Naive thymus-derived CD4-positive, alpha-beta T cell (primary cell): ENCODE measurements at regions of chr16 and their contacts with region 1.

Region 1: DNA sequence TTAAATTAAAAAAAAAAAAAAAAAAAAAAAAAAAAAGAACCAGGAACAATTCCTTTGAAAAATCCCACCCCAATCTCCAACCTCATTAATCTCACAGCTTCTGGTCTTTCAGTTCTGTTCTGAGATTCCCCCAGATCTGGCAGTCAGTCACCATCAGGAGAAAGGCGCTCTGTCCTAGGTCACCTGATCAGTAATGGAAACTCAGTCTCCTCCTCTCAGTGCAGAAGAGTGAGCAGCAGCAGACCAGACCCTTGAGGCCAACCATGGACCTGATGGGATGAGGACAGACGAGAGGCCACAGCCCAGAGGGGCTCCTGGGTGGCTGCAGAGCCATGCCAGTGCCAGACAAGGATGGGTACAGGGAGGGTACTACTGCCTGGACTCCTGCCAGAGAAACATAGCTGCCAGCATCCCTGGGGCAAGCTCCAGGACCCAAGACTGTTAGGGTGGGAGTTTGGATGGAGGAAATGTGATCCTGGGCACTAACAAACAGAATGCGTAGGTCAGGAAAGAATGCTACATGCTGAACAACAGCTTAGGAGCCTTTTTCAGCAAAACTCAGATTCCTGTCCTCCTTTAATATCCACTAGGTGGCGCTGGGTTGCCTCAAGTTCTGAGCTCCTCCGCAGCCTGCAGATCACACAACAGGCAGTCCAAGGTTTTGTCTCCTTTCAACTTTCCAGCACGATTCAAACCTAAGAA is 28.7 kb downstream of the MPG start:
- DNase-seq: peak in 8 of 9 donors; percentile 37 to 73 (median 64)
- ATAC-seq: peak; percentile 89
- H3K4me3 ChIP-seq: no peak overlapping the region
- H3K4me3 Mint-ChIP-seq: no peak overlapping the region
- H3K27ac ChIP-seq: no peak overlapping the region
- H3K27ac Mint-ChIP-seq: peak overlapping the region in 3 of 9 donors; percentile 6 to 62 (median 39)
- H3K4me1 ChIP-seq: no peaks in the 10 kb centered on the region
- H3K4me1 Mint-ChIP-seq: peaks cover 0 to 7% (median 4%) of the 10 kb centered on the region in 7 donors
- H3K27me3 ChIP-seq: no peaks in the 10 kb centered on the region
- H3K27me3 Mint-ChIP-seq: no peaks in the 10 kb centered on the region

Region 2: GRCh38 chr16:57711-58110 is 49.1 kb before region 1 on chr16:
- CTCF ChIA-PET with region 1: no interaction called
- POLR2A ChIA-PET with region 1: no interaction called
- intact Hi-C with region 1: no loop called
- DNase-seq: no peak
- ATAC-seq: no peak
- H3K4me3 ChIP-seq: no peak overlapping the region
- H3K4me3 Mint-ChIP-seq: no peak overlapping the region
- H3K27ac ChIP-seq: no peak overlapping the region
- H3K27ac Mint-ChIP-seq: no peak overlapping the region
- H3K4me1 ChIP-seq: peaks cover 0 to 4% of the 10 kb centered on the region in 2 donors
- H3K4me1 Mint-ChIP-seq: peaks cover 5 to 22% (median 14%) of the 10 kb centered on the region in 7 donors
- H3K27me3 ChIP-seq: no peaks in the 10 kb centered on the region
- H3K27me3 Mint-ChIP-seq: no peaks in the 10 kb centered on the region

Region 3: GRCh38 chr16:143456-143855 is 36.7 kb after region 1 on chr16:
- CTCF ChIA-PET with region 1: no interaction called
- POLR2A ChIA-PET with region 1: no interaction called
- intact Hi-C with region 1: no loop called
- DNase-seq: no peak
- ATAC-seq: no peak
- H3K4me3 ChIP-seq: no peak overlapping the region
- H3K4me3 Mint-ChIP-seq: no peak overlapping the region
- H3K27ac ChIP-seq: no peak overlapping the region
- H3K27ac Mint-ChIP-seq: no peak overlapping the region
- H3K4me1 ChIP-seq: no peaks in the 10 kb centered on the region
- H3K4me1 Mint-ChIP-seq: peaks cover 0 to 5% (median 3%) of the 10 kb centered on the region in 7 donors
- H3K27me3 ChIP-seq: no peaks in the 10 kb centered on the region
- H3K27me3 Mint-ChIP-seq: peaks cover 5 to 15% (median 13%) of the 10 kb centered on the region in 5 donors

Region 4: DNA sequence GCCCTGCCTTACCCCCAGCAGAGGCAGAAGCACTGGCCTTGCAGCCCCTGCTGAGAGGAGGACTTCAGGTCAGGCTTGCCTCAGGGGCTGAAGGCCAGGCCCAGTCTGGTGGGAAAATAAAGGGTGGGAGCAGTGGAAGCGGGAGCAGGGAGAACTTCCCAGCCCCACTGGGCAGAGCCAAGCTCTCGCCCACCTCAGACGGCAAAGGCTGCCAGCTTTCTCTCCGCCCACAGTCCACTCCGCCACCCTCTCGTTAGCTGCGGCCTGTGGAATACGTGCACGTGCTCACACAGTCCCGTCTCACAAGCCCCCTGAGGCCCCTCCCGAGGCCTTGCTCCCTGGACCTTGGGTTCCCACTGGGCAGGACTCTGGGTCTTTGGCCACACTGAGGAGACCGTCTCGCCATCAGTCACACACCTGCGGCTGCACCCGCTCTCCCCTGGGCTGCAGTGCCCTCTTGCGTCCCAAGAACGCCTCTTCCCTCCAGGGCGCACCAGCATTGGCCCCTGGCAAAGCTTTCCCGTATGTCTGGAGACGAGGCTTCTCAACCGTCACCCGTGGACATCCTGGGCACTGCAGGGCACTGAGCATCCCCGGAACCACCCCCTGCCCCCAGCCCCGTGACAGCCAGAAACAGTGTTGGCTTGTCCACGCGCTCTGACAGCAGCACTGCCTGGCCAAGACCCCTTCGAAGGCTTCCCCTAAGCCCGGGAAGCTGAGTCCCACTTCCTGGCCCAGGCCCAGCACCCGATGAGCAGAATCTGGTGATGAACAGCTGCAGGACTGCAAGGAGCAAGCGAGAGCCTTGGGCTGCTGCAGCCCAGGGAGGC is 255.3 kb after region 1 on chr16:
- CTCF ChIA-PET with region 1: interaction called, 35 read pairs
- POLR2A ChIA-PET with region 1: interaction called, 10 read pairs
- intact Hi-C with region 1: loop called (anchors 1 kb)
- DNase-seq: peak; percentile 43 to 74 (median 70)
- ATAC-seq: peak; percentile 92
- H3K4me3 ChIP-seq: no peak overlapping the region
- H3K4me3 Mint-ChIP-seq: peak overlapping the region in 8 of 10 donors; percentile 12 to 77 (median 54)
- H3K27ac ChIP-seq: no peak overlapping the region
- H3K27ac Mint-ChIP-seq: peak overlapping the region in 7 of 9 donors; percentile 32 to 84 (median 69)
- H3K4me1 ChIP-seq: no peaks in the 10 kb centered on the region
- H3K4me1 Mint-ChIP-seq: peaks cover 0 to 12% (median 6%) of the 10 kb centered on the region in 7 donors
- H3K27me3 ChIP-seq: no peaks in the 10 kb centered on the region
- H3K27me3 Mint-ChIP-seq: peaks cover 0 to 4% (median 0%) of the 10 kb centered on the region in 5 donors